Mammary epithelial cell (primary cell): ENCODE measurements at regions of chr2 and their contacts with region 1.

Region 1: GRCh38 chr2:37877457-37878315 is 47.4 kb upstream of the RMDN2 start:
- DNase-seq: peak; percentile 46
- H3K4me3 ChIP-seq: no peak overlapping the region
- H3K27ac ChIP-seq: no peak overlapping the region
- H3K4me1 ChIP-seq: peaks cover 3% of the 10 kb centered on the region
- H3K27me3 ChIP-seq: no peaks in the 10 kb centered on the region
- CTCF ChIP-seq: peak; percentile 38 to 64

Region 2: GRCh38 chr2:37168217-37168981 is 709.3 kb before region 1 on chr2:
- CTCF ChIA-PET with region 1: no interaction called
- dilution Hi-C with region 1: no loop called
- in situ Hi-C with region 1: no loop called
- intact Hi-C with region 1: loop called (anchors 10 kb)
- DNase-seq: peak; percentile 36
- H3K4me3 ChIP-seq: no peak overlapping the region
- H3K27ac ChIP-seq: no peak overlapping the region
- H3K4me1 ChIP-seq: no peaks in the 10 kb centered on the region
- H3K27me3 ChIP-seq: no peaks in the 10 kb centered on the region
- CTCF ChIP-seq: peak; percentile 73 to 81

Region 3: GRCh38 chr2:37397166-37397565 is 480.5 kb before region 1 on chr2:
- CTCF ChIA-PET with region 1: interaction called, 12 read pairs
- dilution Hi-C with region 1: no loop called
- in situ Hi-C with region 1: no loop called
- intact Hi-C with region 1: loop called (anchors 1 kb)
- DNase-seq: no peak
- H3K4me3 ChIP-seq: no peak overlapping the region
- H3K27ac ChIP-seq: no peak overlapping the region
- H3K4me1 ChIP-seq: no peaks in the 10 kb centered on the region
- H3K27me3 ChIP-seq: no peaks in the 10 kb centered on the region
- CTCF ChIP-seq: no peak

Region 4: DNA sequence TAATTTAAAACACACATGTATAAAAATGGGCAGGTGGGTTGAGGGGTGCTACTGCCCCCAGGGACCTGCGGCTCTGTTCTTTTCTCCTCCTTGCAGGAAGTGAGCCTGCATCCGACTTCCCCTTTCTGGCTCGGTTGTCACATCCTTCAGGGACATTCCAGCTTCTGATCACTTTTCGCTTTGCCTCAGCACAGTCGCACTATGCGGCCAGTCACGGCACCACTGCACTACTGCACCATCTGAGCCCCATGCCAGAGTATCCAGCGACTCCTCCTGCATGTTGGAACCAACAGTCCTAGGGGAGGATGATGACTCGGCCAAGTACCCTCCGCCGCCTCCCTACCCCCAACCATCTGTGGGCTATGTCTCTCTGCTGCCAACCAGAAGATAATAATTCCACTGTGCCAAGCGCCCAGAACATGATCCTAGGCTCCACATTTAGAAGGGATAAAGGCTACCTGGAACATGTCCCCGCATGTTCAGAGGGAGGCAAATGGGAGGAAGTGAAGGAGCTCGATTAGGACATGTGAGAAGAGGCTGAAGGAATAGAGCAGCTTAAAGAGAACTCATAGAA is 223.8 kb before region 1 on chr2:
- CTCF ChIA-PET with region 1: no interaction called
- dilution Hi-C with region 1: no loop called
- in situ Hi-C with region 1: no loop called
- intact Hi-C with region 1: loop called (anchors 5 kb)
- DNase-seq: peak; percentile 86
- H3K4me3 ChIP-seq: peak overlapping the region in 1 of 3 experiments; percentile 17
- H3K27ac ChIP-seq: peak overlapping the region; percentile 85
- H3K4me1 ChIP-seq: peaks cover 73% of the 10 kb centered on the region
- H3K27me3 ChIP-seq: no peaks in the 10 kb centered on the region
- CTCF ChIP-seq: no peak

Region 5: GRCh38 chr2:37786854-37787253 is 90.8 kb before region 1 on chr2:
- CTCF ChIA-PET with region 1: no interaction called
- dilution Hi-C with region 1: no loop called
- in situ Hi-C with region 1: no loop called
- intact Hi-C with region 1: no loop called
- DNase-seq: peak; percentile 95
- H3K4me3 ChIP-seq: no peak overlapping the region
- H3K27ac ChIP-seq: peak overlapping the region; percentile 31
- H3K4me1 ChIP-seq: peaks cover 33% of the 10 kb centered on the region
- H3K27me3 ChIP-seq: no peaks in the 10 kb centered on the region
- CTCF ChIP-seq: no peak

Region 6: DNA sequence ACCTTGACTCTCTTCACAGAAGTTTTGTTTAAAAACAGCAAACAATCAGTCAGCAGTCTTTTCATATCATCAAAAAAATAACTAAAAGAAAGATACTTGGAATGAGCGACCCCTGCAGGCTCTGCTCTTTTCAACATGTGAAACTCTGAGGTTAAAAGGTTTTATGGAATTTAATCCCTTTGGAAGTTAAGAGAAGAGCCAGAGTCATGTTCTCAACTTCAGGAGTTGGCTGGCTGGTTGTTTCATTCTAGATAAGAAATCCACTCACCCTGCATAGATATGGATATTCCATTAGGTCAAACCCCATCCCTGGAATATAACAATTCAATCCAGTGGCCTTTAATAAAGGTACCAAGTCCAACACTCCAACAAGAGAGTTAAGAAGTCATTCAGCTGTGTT is 68.2 kb before region 1 on chr2:
- CTCF ChIA-PET with region 1: no interaction called
- dilution Hi-C with region 1: no loop called
- in situ Hi-C with region 1: no loop called
- intact Hi-C with region 1: loop called (anchors 2 kb)
- DNase-seq: peak; percentile 42
- H3K4me3 ChIP-seq: no peak overlapping the region
- H3K27ac ChIP-seq: no peak overlapping the region
- H3K4me1 ChIP-seq: no peaks in the 10 kb centered on the region
- H3K27me3 ChIP-seq: no peaks in the 10 kb centered on the region
- CTCF ChIP-seq: peak; percentile 63 to 65